B cell (primary cell): ENCODE measurements at regions of chr5 and their contacts with region 1.

Region 1: DNA sequence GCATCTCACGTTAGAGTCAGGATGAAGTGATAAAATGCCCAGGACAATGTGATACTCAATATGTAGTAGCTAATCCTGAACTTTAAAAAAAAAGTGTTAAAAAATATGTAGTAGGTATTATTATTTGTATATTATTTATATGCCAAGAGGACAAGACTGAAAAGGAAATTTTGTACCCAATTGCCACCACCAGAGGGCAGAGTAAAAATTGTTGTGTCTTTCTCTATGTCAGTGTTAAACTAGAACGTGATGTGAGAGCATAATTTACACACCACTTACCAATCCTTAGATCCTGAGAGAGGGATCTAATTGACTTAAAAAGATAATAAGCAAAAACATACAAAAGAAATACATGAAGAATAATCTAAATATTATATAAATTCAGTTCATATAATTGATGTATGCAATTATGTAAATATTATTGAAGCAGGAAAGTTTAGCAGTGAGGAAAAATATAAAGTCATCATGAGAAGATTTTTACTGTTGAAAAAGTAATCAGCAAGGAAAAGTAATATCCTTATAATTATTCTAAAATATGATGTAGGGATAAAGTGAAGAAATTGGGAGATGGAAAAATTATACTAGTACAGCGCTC is 288.9 kb downstream of the RAB3C start:
- DNase-seq: peak; percentile 42
- ATAC-seq: no peak
- H3K4me3 ChIP-seq: no peak overlapping the region
- H3K4me3 Mint-ChIP-seq: no peak overlapping the region
- H3K27ac ChIP-seq: no peak overlapping the region
- H3K27ac Mint-ChIP-seq: no peak overlapping the region
- H3K4me1 ChIP-seq: no peaks in the 10 kb centered on the region
- H3K4me1 Mint-ChIP-seq: no peaks in the 10 kb centered on the region
- H3K27me3 ChIP-seq: no peaks in the 10 kb centered on the region
- H3K27me3 Mint-ChIP-seq: peaks cover 7% of the 10 kb centered on the region
- CTCF ChIP-seq: peak; percentile 87

Region 2: GRCh38 chr5:58855851-58856739 is 15.7 kb before region 1 on chr5:
- CTCF ChIA-PET with region 1: interaction called, 14 read pairs
- POLR2A ChIA-PET with region 1: no interaction called
- intact Hi-C with region 1: no loop called
- DNase-seq: no peak
- ATAC-seq: no peak
- H3K4me3 ChIP-seq: no peak overlapping the region
- H3K4me3 Mint-ChIP-seq: no peak overlapping the region
- H3K27ac ChIP-seq: no peak overlapping the region
- H3K27ac Mint-ChIP-seq: no peak overlapping the region
- H3K4me1 ChIP-seq: no peaks in the 10 kb centered on the region
- H3K4me1 Mint-ChIP-seq: no peaks in the 10 kb centered on the region
- H3K27me3 ChIP-seq: peaks cover 0 to 6% (median 4%) of the 10 kb centered on the region in 4 experiments
- H3K27me3 Mint-ChIP-seq: peaks cover 18% of the 10 kb centered on the region
- CTCF ChIP-seq: no peak